Posterior cingulate gyrus (tissue), 11 donors: ENCODE measurements at regions of chr2 and their contacts with region 1.

Region 1: DNA sequence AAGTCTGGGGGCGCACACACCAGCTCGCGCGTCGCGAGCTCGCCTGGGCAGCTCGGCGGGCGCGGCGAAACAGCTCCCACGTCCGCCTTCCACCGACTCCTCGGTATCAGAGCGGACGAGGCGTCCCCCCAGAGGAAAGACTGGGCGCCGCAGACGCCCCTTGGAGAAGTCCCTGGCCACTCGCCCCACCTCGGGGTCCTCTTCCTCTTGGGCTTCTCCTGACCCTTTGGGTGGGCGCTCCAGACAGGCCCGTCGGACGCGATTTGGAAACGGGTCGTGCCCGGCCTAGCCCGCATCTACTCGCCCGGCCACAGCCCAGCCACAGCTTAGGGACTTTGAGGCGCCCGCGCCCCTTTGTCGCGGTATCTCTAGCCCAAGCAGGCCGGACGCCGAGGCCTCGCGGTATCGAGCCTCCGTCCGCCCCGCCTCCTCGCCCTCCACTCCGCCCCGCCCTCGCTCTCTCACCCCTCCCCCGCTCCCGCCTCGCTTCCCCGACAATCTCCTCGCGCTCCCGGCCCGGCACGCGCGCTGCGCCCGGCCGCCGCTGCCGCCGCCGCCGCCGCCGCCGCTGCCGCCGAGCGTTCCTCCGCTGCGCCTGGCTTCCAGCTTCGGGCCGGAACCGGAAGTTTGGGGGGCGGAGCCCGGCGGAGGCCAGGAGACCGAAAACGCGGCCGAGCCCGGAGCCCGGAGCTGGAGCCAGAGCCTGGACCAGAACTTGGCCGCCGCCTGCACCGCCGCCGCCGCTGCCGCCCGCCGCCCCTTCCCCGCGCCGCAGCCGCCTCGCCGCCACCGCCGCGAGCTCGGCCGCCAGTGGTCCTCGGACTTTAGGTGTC is 749 bp upstream of the ACVR2A start:
- DNase-seq: peak; percentile 85 to 98 (median 89)

Region 2: DNA sequence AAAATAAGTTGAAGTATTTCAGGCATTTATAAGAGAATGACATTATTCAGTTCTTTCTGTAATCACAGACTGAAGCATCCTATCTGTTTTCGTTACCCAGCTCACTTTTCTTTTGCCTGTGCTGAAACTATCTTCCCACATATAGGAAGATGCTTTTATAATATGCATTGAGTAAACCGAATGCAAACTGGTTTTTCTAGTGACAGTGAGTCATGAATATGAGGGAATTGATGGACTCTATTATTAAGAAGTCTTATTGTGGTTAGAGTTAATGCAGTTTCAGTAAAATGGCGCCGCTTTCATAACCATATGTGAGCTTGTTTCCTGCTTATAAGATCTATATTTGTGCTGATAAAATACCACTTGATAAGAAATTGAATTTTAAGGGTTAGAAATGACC is 60.0 kb after region 1 on chr2:
- intact Hi-C with region 1: loop called (anchors 5 kb)
- DNase-seq: no peak

Region 3: DNA sequence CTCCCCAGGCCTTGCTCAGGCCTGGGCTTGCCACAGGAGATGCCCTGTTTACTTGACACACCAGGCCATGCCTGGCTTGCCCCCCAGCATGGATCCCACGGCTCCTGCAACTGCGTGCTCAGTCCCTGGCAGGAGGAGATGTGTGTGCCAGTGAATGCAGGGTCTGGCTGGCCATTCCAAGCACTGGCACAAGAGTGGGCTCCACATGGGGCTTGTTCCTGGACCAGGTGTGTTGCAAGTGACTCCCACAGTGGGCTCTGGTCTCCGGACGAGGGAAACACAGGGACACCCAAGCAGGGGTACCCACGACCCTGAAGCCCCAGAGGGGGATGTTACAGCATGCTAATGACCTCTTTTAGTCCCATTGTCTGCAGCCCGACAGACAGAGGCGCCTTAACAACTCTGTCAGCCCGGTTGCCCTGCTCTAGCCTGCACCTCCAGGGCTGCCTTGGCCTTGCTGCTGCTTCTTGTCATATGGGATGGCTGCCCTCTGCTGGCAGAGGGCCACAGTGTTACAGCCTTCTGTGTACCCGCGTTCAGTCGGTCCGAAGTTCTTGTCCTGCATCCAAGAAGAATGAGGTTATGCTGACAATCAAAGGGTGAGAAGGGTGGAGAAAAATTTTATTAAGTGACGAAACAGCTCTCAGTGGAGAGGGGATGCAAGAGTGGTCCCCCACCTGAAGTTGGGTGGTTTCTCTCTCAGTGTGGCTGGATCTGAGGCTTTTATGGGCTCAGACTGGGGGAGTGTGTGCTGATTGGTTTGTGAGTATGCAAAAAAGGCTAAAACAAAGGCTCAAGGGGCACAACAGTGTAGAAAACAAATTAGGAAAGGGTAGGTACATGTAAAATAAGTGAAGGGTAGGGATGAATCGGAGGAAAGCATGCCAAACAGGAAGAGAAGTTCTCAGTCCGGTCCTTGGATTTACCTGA is 357.3 kb after region 1 on chr2:
- intact Hi-C with region 1: no loop called
- DNase-seq: peak in 4 of 10 donors; percentile 10 to 82 (median 50)